GM12878 (cell line): ENCODE measurements at regions of chr1 and their contacts with region 1.

Region 1: GRCh38 chr1:25099343-25099951 is 132.9 kb downstream of the SYF2 start:
- DNase-seq: no peak
- ATAC-seq: peak; percentile 47
- H3K4me3 ChIP-seq: no peak overlapping the region
- H3K27ac ChIP-seq: no peak overlapping the region
- H3K4me1 ChIP-seq: peaks cover 55% of the 10 kb centered on the region
- H3K27me3 ChIP-seq: no peaks in the 10 kb centered on the region
- CTCF ChIP-seq: no peak
- EP300 ChIP-seq: 0 out of 4 replicates have a peak, but pooled peaks of 1 of the 2 experiments have one; percentile 10
- POLR2A ChIP-seq: no peak
- RAD21 ChIP-seq: no peak

Region 2: DNA sequence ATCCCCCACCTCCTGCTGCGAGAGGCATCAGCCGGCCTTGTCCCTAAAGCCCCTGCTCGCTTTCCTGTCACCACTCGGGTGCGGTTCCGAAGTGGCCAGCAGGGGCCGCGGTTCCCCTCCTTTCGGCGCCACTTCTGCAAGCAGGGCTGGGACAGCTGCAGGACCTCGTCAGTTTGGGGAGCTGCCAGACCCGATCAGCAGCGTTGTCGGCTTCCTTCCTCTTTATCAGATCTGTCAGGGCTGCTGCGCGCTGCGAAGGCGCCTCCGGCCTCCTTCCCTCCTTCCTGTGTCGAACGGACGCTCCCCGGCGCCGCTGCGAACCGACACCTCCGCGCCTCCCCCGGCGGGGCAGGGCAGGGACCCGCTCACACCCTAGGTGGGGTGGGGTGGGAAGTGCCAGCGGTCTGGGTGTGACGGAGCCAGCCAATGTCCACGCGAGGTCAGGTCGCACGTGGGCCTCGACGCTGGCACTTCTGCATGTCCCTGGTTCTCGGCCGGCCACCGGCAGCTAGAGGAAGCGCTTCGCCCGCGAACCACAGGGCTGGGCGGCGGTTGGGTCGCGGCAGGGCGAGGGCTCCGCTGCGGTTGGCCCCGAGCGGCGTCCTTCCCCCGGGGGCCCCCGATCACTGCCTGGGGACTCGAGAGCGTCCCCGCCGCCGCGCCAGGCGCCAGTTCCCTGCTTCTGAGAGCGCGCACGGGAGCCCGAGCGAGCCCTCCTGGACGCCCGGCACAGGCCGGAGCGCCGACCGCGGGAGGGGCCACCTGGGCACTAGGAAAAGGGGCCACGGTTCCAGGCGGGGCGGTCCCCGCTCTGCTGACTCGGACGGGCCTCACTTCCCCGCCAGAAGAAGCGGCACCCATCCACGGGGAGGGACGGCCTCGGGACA is 251.2 kb before region 1 on chr1:
- CTCF ChIA-PET with region 1: interaction called, 69 read pairs
- POLR2A ChIA-PET with region 1: interaction called, 6 read pairs
- RAD21 ChIA-PET with region 1: interaction called, 60 read pairs
- SMC1A ChIA-PET with region 1: interaction called, 34 read pairs
- in situ Hi-C with region 1: loop called (anchors 5 kb)
- intact Hi-C with region 1: loop called (anchors 1 kb)
- DNase-seq: peak; percentile 71
- ATAC-seq: peak; percentile 97
- H3K4me3 ChIP-seq: peak overlapping the region; percentile 56; the same call in 1 of the 2 replicates
- H3K27ac ChIP-seq: no peak overlapping the region
- H3K4me1 ChIP-seq: no peaks in the 10 kb centered on the region
- H3K27me3 ChIP-seq: no peaks in the 10 kb centered on the region
- CTCF ChIP-seq: peak; percentile 93 to 99 (median 98)
- EP300 ChIP-seq: no peak
- POLR2A ChIP-seq: peak; percentile 84
- RAD21 ChIP-seq: peak; percentile 93

Region 3: GRCh38 chr1:24930204-24931145 is 169.0 kb before region 1 on chr1 and contains the start of gene RUNX3:
- CTCF ChIA-PET with region 1: interaction called, 9 read pairs
- POLR2A ChIA-PET with region 1: interaction called, 5 read pairs
- RAD21 ChIA-PET with region 1: interaction called, 14 read pairs
- SMC1A ChIA-PET with region 1: interaction called, 11 read pairs
- in situ Hi-C with region 1: no loop called
- intact Hi-C with region 1: loop called (anchors 5 kb)
- DNase-seq: peak; percentile 76
- ATAC-seq: peak; percentile 77
- H3K4me3 ChIP-seq: peak within 1 kb of the TSS; percentile 99
- H3K27ac ChIP-seq: peak within 1 kb of the TSS; percentile 89
- H3K4me1 ChIP-seq: peaks cover 40% of the 10 kb centered on the region
- H3K27me3 ChIP-seq: no peaks in the 10 kb centered on the region
- CTCF ChIP-seq: peak; percentile 14 to 45 (median 35); a peak in 3 of 6 replicates
- EP300 ChIP-seq: peak in 1 of 2 experiments; percentile 39; a peak in 1 of 4 replicates
- POLR2A ChIP-seq: peak; percentile 11; the same call in 1 of the 2 replicates
- RAD21 ChIP-seq: no peak
- polyA plus RNA-seq, gene RUNX3: 21.6 to 26.3 TPM

Region 4: GRCh38 chr1:24955161-24955560 is 144.3 kb before region 1 on chr1:
- CTCF ChIA-PET with region 1: interaction called, 26 read pairs
- POLR2A ChIA-PET with region 1: interaction called, 5 read pairs
- RAD21 ChIA-PET with region 1: interaction called, 5 read pairs
- SMC1A ChIA-PET with region 1: interaction called, 20 read pairs
- in situ Hi-C with region 1: loop called (anchors 5 kb)
- intact Hi-C with region 1: loop called (anchors 5 kb)
- DNase-seq: no peak
- ATAC-seq: peak; percentile 57
- H3K4me3 ChIP-seq: peak overlapping the region; percentile 52
- H3K27ac ChIP-seq: peak overlapping the region; percentile 76
- H3K4me1 ChIP-seq: peaks cover 92% of the 10 kb centered on the region
- H3K27me3 ChIP-seq: no peaks in the 10 kb centered on the region
- CTCF ChIP-seq: no peak
- EP300 ChIP-seq: no peak
- POLR2A ChIP-seq: no peak; the same call in 1 of the 2 replicates
- RAD21 ChIP-seq: no peak

Region 5: GRCh38 chr1:25022361-25023189 is 76.9 kb before region 1 on chr1:
- CTCF ChIA-PET with region 1: interaction called, 15 read pairs
- POLR2A ChIA-PET with region 1: interaction called, 3 read pairs
- RAD21 ChIA-PET with region 1: interaction called, 9 read pairs
- SMC1A ChIA-PET with region 1: interaction called, 6 read pairs
- in situ Hi-C with region 1: no loop called
- intact Hi-C with region 1: no loop called
- DNase-seq: peak; percentile 97
- ATAC-seq: peak; percentile 85
- H3K4me3 ChIP-seq: peak overlapping the region; percentile 56
- H3K27ac ChIP-seq: peak overlapping the region; percentile 100
- H3K4me1 ChIP-seq: peaks cover 94% of the 10 kb centered on the region
- H3K27me3 ChIP-seq: no peaks in the 10 kb centered on the region
- CTCF ChIP-seq: no peak
- EP300 ChIP-seq: peak; percentile 96 to 97
- POLR2A ChIP-seq: no peak
- RAD21 ChIP-seq: peak; percentile 34

Region 6: DNA sequence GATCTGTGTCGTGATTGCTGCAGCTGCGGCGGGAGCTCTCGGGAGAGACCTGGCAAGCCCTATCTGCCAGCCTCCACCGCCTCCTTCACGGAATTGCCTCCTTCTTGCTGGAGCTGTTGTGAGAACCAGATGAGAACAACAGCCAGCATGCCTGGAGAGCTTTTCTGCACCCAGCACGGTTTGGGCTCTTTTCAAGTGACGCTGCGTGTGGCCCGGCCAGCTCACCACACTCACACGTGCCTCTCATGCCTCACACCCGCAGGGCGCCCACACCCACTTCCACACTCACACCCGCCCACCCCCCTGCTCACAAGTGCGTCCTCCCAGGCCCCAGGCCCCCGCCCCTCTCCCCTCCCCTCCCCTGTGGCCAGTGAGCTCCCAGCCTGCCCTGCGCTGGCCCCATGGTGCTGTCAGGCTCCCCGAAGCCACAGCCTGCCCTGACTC is 33.6 kb before region 1 on chr1:
- CTCF ChIA-PET with region 1: interaction called, 13 read pairs
- POLR2A ChIA-PET with region 1: no interaction called
- RAD21 ChIA-PET with region 1: interaction called, 12 read pairs
- SMC1A ChIA-PET with region 1: interaction called, 6 read pairs
- in situ Hi-C with region 1: no loop called
- intact Hi-C with region 1: no loop called
- DNase-seq: no peak
- ATAC-seq: peak; percentile 28; the same call in 1 of the 3 replicates
- H3K4me3 ChIP-seq: no peak overlapping the region
- H3K27ac ChIP-seq: no peak overlapping the region
- H3K4me1 ChIP-seq: peaks cover 6% of the 10 kb centered on the region; the same call in 1 of the 2 replicates
- H3K27me3 ChIP-seq: no peaks in the 10 kb centered on the region; a peak in 1 of 4 replicates
- CTCF ChIP-seq: no peak
- EP300 ChIP-seq: no peak
- POLR2A ChIP-seq: no peak
- RAD21 ChIP-seq: no peak

Region 7: DNA sequence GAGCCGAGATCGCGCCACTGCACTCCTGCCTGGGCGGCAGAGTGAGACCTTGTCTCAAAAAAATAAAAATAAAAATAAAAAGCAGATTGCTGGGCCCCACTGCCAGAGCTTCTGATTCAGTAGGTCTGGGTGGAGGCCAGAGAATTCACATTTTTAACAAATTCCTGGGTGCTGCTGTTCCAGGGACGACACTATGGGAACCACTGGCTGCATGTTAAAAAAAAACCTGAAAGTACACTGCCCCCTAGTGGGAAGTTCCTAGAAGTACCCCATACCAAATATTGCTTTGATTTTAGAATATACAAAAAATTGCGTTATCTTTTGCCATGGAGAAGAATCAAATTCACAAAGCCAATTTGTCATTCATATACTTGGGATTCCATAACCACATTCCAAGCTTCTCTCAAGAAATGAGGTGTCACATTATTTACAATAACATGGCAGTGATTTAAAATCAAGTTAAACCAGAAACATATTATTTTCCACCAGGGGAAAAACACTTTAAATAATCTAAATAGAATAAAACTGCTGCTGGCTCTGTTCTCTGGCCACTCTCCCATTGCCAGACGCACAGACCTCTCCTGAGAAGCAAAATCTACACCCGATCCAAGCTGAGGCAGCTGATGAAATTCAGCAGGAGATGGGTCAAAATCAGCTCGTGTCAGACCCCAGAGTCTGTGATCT is 105.5 kb after region 1 on chr1:
- CTCF ChIA-PET with region 1: interaction called, 29 read pairs
- POLR2A ChIA-PET with region 1: no interaction called
- RAD21 ChIA-PET with region 1: interaction called, 3 read pairs
- SMC1A ChIA-PET with region 1: interaction called, 4 read pairs
- in situ Hi-C with region 1: no loop called
- intact Hi-C with region 1: no loop called
- DNase-seq: no peak
- ATAC-seq: peak; percentile 77
- H3K4me3 ChIP-seq: no peak overlapping the region
- H3K27ac ChIP-seq: no peak overlapping the region
- H3K4me1 ChIP-seq: no peaks in the 10 kb centered on the region
- H3K27me3 ChIP-seq: peaks cover 0 to 3% of the 10 kb centered on the region in 2 experiments; a peak in 1 of 4 replicates
- CTCF ChIP-seq: peak; percentile 56 to 65 (median 64)
- EP300 ChIP-seq: no peak
- POLR2A ChIP-seq: no peak
- RAD21 ChIP-seq: peak; percentile 79

Region 8: DNA sequence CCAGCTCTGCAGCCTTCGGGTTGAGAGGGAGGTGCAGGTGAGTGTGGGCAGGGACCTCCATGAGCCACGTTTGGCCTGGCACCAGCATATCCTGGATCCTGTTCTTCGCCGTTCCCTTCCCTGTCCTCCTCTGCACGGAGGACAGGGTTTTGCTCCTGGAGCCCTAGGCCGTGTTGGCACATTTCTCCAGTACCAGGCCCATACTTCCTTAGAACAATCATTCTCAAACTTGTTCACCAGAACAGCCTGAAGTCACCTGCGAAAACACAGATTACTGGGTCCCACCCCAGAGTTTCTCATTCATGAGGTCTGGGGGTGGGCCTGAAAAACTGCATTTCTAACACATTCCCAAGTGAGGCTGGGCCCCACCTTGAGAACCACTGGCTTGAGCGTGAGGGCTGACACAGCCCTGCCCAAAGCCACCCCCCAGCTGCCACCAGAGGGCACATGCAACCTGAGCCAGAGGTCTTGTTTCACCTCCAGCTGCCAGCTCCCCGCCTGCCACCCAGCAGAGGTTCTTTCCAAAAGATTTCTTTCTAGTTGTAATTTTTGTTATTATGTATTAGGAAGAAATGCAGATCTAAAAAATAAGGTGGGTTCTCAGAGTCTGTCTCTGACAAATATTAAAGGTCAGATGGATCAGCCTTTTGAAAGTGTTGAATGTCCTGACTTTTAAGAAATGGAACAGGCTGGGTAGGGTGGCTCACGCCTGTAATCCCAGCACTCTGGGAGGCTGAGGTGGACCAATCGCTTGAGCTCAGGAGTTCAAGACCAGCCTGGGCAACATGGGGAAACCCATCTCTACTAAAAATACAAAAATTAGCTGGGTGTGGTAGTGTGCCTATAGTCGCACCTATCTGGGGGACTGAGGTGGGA is 404.3 kb after region 1 on chr1:
- CTCF ChIA-PET with region 1: no interaction called
- POLR2A ChIA-PET with region 1: no interaction called
- RAD21 ChIA-PET with region 1: no interaction called
- SMC1A ChIA-PET with region 1: no interaction called
- in situ Hi-C with region 1: no loop called
- intact Hi-C with region 1: no loop called
- DNase-seq: no peak
- ATAC-seq: peak; percentile 98
- H3K4me3 ChIP-seq: no peak overlapping the region
- H3K27ac ChIP-seq: no peak overlapping the region
- H3K4me1 ChIP-seq: no peaks in the 10 kb centered on the region
- H3K27me3 ChIP-seq: no peaks in the 10 kb centered on the region
- CTCF ChIP-seq: peak; percentile 56 to 72 (median 71)
- EP300 ChIP-seq: no peak
- POLR2A ChIP-seq: no peak
- RAD21 ChIP-seq: peak; percentile 40; the same call in 1 of the 2 replicates

Region 9: GRCh38 chr1:26009796-26010460 is 910.5 kb after region 1 on chr1:
- CTCF ChIA-PET with region 1: no interaction called
- POLR2A ChIA-PET with region 1: no interaction called
- RAD21 ChIA-PET with region 1: no interaction called
- SMC1A ChIA-PET with region 1: no interaction called
- in situ Hi-C with region 1: no loop called
- intact Hi-C with region 1: no loop called
- DNase-seq: no peak
- ATAC-seq: peak; percentile 64
- H3K4me3 ChIP-seq: no peak overlapping the region
- H3K27ac ChIP-seq: no peak overlapping the region
- H3K4me1 ChIP-seq: no peaks in the 10 kb centered on the region
- H3K27me3 ChIP-seq: no peaks in the 10 kb centered on the region; a peak in 1 of 4 replicates
- CTCF ChIP-seq: peak in 1 of 3 experiments; percentile 7; a peak in 1 of 6 replicates
- EP300 ChIP-seq: no peak
- POLR2A ChIP-seq: no peak
- RAD21 ChIP-seq: peak; percentile 10; the same call in 1 of the 2 replicates